K562 (cell line): ENCODE measurements at regions of chr2 and their contacts with region 1.

Region 1: GRCh38 chr2:10043906-10044601 is 704 bp downstream of the KLF11 start:
- DNase-seq: peak; percentile 89 to 98 (median 94)
- ATAC-seq: peak; percentile 91
- H3K4me3 ChIP-seq: peak overlapping the region; percentile 61
- H3K27ac ChIP-seq: peak overlapping the region; percentile 99
- H3K4me1 ChIP-seq: peaks cover 7 to 59% of the 10 kb centered on the region in 2 experiments; a peak in 4 of 5 replicates
- H3K27me3 ChIP-seq: no peaks in the 10 kb centered on the region
- CTCF ChIP-seq: no peak
- EP300 ChIP-seq: peak; percentile 67
- POLR2A ChIP-seq: no peak
- RAD21 ChIP-seq: no peak

Region 2: DNA sequence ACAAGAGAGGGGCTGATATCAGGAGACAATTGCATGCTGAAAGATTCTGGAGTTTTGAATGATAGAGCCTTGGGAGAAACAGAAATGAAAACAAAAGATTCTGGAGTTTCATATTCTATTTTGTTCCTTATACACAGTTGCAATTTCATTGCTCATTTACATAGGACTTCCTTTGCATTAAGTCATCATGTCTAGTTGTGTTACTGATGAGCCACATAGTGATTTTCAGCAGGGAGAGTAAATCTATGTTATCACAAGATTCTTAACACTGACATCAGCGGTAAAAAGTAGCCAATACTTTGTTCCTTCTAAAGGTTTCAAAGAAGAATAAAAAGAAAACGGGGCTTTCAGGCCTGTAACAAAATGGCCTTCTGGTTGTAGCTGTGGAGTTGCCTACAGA is 495.5 kb before region 1 on chr2:
- CTCF ChIA-PET with region 1: no interaction called
- POLR2A ChIA-PET with region 1: no interaction called
- in situ Hi-C with region 1: no loop called
- intact Hi-C with region 1: no loop called
- DNase-seq: peak in 1 of 4 experiments; percentile 8
- ATAC-seq: peak; percentile 22
- H3K4me3 ChIP-seq: no peak overlapping the region
- H3K27ac ChIP-seq: peak overlapping the region; percentile 13; the same call in 1 of the 3 replicates
- H3K4me1 ChIP-seq: peaks cover 5 to 26% of the 10 kb centered on the region in 2 experiments; a peak in 4 of 5 replicates
- H3K27me3 ChIP-seq: no peaks in the 10 kb centered on the region
- CTCF ChIP-seq: no peak
- EP300 ChIP-seq: no peak
- POLR2A ChIP-seq: no peak
- RAD21 ChIP-seq: no peak

Region 3: DNA sequence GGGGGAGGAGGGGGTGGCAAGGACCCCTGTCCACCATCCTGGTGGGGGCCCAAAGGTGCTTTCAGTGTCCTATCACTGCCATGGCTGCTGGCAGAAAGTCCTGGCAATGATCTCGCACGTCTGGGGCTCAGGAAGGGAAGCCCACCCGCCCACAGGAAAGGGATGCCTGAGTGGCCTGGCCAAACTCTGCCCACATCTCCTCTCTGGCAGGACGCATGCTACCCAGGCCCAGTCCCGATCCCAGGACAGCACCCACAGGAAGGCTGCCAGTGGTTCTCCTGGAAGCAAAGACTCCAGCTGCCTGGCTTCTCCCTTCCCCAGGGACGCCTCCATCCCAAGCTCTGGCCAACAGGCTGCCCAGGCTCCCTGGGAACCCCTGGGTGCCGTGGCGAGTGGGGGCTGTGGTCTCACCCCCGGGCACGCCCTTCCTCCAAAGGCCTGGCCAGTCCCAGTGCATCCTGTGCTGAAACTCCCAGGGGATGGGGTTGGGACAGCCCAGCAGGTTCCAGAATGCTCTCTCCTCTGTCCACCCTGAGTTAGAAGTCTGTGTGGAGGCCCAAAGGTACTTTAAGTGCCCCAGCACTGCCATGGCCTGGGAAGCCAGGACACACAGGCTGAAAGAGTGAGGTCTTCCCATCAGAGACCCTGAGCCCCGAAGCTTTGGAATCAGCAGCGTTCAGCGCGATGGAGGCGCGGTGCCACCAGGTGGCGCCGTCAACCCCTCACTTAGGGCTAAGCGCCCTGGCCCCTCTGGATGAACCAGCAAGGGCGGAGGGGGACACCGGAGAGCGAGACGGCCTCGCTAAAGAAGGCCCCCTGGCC is 230.5 kb before region 1 on chr2:
- CTCF ChIA-PET with region 1: interaction called, 26 read pairs
- POLR2A ChIA-PET with region 1: interaction called, 6 read pairs
- in situ Hi-C with region 1: loop called (anchors 5 kb)
- intact Hi-C with region 1: loop called (anchors 1 kb)
- DNase-seq: peak; percentile 79 to 87 (median 84)
- ATAC-seq: peak; percentile 94
- H3K4me3 ChIP-seq: no peak overlapping the region
- H3K27ac ChIP-seq: no peak overlapping the region
- H3K4me1 ChIP-seq: peaks cover 19 to 36% of the 10 kb centered on the region in 2 experiments; a peak in 4 of 5 replicates
- H3K27me3 ChIP-seq: no peaks in the 10 kb centered on the region
- CTCF ChIP-seq: peak; percentile 88 to 95 (median 90)
- EP300 ChIP-seq: no peak
- POLR2A ChIP-seq: no peak
- RAD21 ChIP-seq: peak; percentile 77 to 93

Region 4: GRCh38 chr2:9984217-9984739 is 59.8 kb before region 1 on chr2:
- CTCF ChIA-PET with region 1: interaction called, 3 read pairs
- POLR2A ChIA-PET with region 1: interaction called, 3 read pairs
- in situ Hi-C with region 1: loop called (anchors 5 kb)
- intact Hi-C with region 1: loop called (anchors 1 kb)
- DNase-seq: peak; percentile 61 to 74 (median 64)
- ATAC-seq: peak; percentile 90
- H3K4me3 ChIP-seq: no peak overlapping the region
- H3K27ac ChIP-seq: no peak overlapping the region
- H3K4me1 ChIP-seq: peaks cover 7 to 8% of the 10 kb centered on the region in 2 experiments; a peak in 3 of 5 replicates
- H3K27me3 ChIP-seq: no peaks in the 10 kb centered on the region
- CTCF ChIP-seq: peak; percentile 54 to 78 (median 78); a peak in 5 of 6 replicates
- EP300 ChIP-seq: no peak
- POLR2A ChIP-seq: no peak
- RAD21 ChIP-seq: peak; percentile 68 to 71

Region 5: DNA sequence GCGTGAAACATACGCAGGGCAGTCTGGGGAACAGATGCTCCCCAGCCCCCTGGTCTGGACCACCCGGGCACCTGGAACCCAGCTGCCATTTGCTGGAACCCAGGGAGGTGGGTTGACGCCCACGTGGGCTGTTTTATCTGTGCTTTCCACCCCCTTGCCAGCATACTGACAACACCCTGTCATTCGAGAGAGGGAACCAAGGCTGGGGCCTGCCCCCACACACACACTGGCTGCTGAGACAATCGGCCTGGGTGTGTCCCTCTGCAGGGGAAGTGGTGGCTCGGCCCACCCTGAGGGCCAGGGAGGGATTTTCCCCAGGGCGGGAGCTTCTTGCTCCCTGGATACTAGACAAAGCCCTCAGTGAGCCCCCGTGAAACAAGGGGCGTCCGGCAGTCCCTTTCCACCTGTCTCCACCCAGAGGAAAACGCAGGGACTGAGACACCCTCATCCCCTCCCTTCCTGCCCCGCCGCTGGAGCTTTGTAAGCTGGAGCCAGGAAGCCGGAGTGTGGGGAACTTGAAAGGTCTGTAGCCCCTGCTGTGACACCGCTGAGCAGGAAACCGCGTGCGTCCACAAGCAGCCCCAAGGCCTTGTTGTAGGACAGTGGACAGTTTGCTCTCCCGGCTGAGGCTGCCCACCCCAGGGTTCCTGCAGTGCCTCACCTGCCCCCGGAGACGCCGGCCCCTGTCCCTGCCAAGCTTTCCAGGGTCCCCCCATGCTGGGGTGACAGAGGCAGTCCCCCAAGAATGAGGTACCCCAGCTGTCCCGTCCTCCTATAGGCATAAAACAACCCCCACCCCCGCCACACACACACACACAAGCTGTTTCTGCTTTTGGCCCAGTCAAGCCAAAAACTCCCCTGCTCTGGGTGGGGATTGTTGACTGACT is 14.8 kb before region 1 on chr2:
- CTCF ChIA-PET with region 1: interaction called, 3 read pairs
- POLR2A ChIA-PET with region 1: interaction called, 18 read pairs
- in situ Hi-C with region 1: no loop called
- intact Hi-C with region 1: no loop called
- DNase-seq: peak; percentile 90 to 94 (median 93)
- ATAC-seq: peak; percentile 91
- H3K4me3 ChIP-seq: peak overlapping the region; percentile 47
- H3K27ac ChIP-seq: peak overlapping the region; percentile 96
- H3K4me1 ChIP-seq: peaks cover 34 to 60% of the 10 kb centered on the region in 2 experiments
- H3K27me3 ChIP-seq: no peaks in the 10 kb centered on the region; a peak in 1 of 5 replicates
- CTCF ChIP-seq: no peak
- EP300 ChIP-seq: peak; percentile 56; the same call in 1 of the 2 replicates
- POLR2A ChIP-seq: peak; percentile 86
- RAD21 ChIP-seq: no peak

Region 6: DNA sequence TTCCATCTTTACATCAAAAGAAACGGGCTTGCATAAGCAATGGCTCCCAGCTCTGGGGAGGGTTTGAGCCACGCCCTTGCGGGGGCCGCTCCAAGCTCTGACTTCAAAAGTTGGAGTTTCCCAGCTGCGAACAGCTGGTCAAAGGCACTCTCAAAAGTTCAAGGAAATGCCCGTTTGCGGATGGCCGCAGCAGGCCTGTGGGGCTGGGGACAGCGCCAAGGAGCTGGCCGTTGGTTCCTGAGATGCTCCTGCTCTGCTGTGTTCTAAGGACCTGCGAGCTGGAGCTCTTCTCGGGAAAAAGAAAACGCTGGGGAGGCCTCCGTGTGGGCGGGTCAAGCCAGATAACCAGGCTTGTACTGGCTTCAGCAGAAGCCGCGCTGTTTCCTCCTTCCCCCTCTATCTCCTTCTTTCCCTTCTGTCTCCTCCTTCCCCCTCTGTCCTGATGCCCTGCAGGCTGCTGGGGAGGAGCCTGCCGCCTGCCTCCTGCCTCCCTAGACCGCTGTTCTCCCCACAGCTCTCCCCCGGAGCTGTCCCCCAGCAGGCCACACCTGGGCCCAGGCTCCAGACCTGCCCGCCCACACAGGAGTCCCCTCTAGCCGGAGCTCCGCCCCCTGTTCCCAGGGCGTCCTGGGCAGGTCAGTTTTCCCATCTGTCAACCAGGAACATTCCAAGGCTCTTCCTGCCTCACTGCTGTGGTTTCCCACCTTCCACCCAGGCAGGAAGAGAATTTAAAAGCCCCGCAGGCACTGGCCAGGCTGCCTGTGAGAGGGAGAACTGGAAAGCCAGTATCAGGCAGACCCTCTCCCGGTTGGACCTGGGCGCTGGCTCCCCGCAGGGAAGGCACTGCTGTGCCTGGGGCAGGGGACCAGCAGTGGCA is 13.4 kb after region 1 on chr2:
- CTCF ChIA-PET with region 1: no interaction called
- POLR2A ChIA-PET with region 1: interaction called, 13 read pairs
- in situ Hi-C with region 1: no loop called
- intact Hi-C with region 1: no loop called
- DNase-seq: peak; percentile 85 to 91 (median 89)
- ATAC-seq: peak; percentile 87
- H3K4me3 ChIP-seq: peak overlapping the region; percentile 40
- H3K27ac ChIP-seq: peak overlapping the region; percentile 42; the same call in 2 of the 3 replicates
- H3K4me1 ChIP-seq: peaks cover 11 to 50% of the 10 kb centered on the region in 2 experiments
- H3K27me3 ChIP-seq: no peaks in the 10 kb centered on the region
- CTCF ChIP-seq: no peak
- EP300 ChIP-seq: peak; percentile 45
- POLR2A ChIP-seq: peak; percentile 46; the same call in 1 of the 2 replicates
- RAD21 ChIP-seq: 0 out of 4 replicates have a peak, but pooled peaks of 1 of the 2 experiments have one; percentile 1